AG04449 (cell line): ENCODE measurements at regions of chr1 and their contacts with region 1.

Region 1: DNA sequence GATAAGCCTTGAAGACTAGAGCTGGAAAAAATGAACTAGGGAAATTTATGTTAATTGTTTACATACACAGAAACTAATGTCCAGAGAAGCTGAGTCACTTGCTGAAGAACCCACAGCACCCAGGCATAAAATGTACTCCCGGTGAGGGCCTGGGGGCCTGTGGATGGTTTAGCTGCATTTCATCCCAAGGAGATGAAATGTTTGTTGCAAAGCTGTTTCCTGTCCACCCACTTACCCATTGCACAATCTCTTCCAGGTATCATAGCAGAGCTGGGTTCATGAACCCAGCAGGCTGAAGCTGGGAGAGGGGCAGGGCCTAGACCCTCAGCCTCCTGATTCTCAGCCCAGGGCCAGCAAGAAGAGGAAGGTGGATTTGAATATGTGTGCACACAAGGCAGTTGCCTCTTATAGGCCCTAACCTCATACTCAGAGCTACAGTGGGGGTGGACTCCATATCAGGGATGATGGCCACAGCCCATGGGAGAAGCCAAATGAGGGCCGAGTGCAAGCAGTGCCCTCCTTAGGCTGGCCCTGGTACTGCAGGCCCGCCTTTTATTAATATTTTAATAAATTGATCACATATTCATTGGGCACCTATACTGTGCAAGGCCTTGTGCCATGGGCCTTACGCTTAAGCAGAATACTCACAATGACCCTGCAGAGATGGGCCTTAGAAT is 110.8 kb downstream of the LACTBL1 start:
- DNase-seq: peak; percentile 28
- H3K4me3 ChIP-seq: no peak overlapping the region
- CTCF ChIP-seq: peak; percentile 78

Region 2: GRCh38 chr1:22673486-22674409 is 188.2 kb before region 1 on chr1:
- CTCF ChIA-PET with region 1: interaction called, 63 read pairs
- POLR2A ChIA-PET with region 1: no interaction called
- DNase-seq: peak; percentile 7
- H3K4me3 ChIP-seq: no peak overlapping the region
- CTCF ChIP-seq: peak; percentile 75

Region 3: GRCh38 chr1:22835636-22836319 is 26.1 kb before region 1 on chr1:
- CTCF ChIA-PET with region 1: interaction called, 11 read pairs
- POLR2A ChIA-PET with region 1: no interaction called
- DNase-seq: no peak
- H3K4me3 ChIP-seq: no peak overlapping the region
- CTCF ChIP-seq: no peak

Region 4: GRCh38 chr1:22850681-22851080 is 11.2 kb before region 1 on chr1:
- CTCF ChIA-PET with region 1: interaction called, 86 read pairs
- POLR2A ChIA-PET with region 1: no interaction called
- DNase-seq: no peak
- H3K4me3 ChIP-seq: no peak overlapping the region
- CTCF ChIP-seq: no peak

Region 5: GRCh38 chr1:22889213-22889827 is 27.4 kb after region 1 on chr1:
- CTCF ChIA-PET with region 1: interaction called, 26 read pairs
- POLR2A ChIA-PET with region 1: no interaction called
- DNase-seq: no peak
- H3K4me3 ChIP-seq: no peak overlapping the region
- CTCF ChIP-seq: peak; percentile 71